T-cell (primary cell): ENCODE measurements at regions of chr7 and their contacts with region 1.

Region 1: DNA sequence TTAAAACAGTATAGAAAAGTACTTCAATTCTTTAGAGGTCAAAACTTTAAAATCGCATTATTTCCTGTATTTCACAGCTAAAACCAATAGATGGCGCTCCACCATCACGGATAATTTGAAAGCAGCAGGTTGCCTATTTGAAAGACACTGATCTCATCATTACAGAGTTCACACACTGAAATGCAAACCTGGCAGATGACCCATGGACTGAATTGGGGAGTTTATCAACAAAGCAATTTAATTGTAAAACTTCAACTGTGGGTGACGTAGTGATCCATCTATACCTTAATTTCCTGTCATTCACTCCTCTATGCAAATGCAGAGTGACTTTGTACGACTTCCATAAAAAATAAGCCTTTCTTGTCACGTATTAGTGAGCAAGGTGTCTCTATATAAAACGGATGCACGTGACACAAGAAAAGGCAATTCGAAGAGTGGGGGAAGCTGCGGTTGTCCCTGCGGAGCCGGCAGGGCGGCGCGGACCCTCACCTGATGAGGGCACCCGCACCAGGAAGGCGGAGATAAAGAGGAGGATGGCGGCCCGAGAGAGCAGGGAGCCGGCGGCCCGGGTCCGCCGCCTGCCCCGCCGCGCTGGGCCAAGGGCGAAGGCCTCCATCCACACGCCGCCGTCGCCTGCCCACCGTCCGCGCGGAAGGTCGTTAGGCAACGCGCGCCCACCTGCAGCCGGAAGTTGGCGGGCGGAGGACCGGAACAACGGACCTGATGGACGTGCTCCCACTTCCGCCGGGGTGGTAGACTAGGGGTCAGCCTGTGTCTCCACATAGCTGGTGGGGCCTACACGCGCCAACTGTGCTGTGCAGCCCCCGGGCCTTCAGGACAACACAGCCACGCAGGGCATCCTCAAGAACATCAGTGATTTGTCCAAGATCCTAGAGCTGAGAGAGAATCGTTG is at the start of gene ZPBP:
- DNase-seq: peak in 32 of 35 experiments; percentile 8 to 82 (median 40)
- ATAC-seq: peak; percentile 71 to 80 (median 79)
- H3K4me3 ChIP-seq: peak within 1 kb of the TSS; percentile 55 to 56
- H3K4me3 Mint-ChIP-seq: peak within 1 kb of the TSS; percentile 87 to 90 (median 87)
- H3K27ac ChIP-seq: peak within 1 kb of the TSS; percentile 45
- H3K27ac Mint-ChIP-seq: peak within 1 kb of the TSS; percentile 66 to 80
- H3K4me1 ChIP-seq: peaks cover 2 to 4% of the 10 kb centered on the region in 2 experiments
- H3K4me1 Mint-ChIP-seq: peaks cover 8 to 17% (median 15%) of the 10 kb centered on the region in 3 donors
- H3K27me3 ChIP-seq: peaks cover 0 to 2% of the 10 kb centered on the region in 2 experiments
- H3K27me3 Mint-ChIP-seq: no peaks in the 10 kb centered on the region
- total RNA-seq, gene ZPBP: 0.46 TPM in 1 of 5 donors, not detected in the others

Region 2: GRCh38 chr7:50056131-50056530 is 36.7 kb before region 1 on chr7:
- CTCF ChIA-PET with region 1: no interaction called
- POLR2A ChIA-PET with region 1: no interaction called
- DNase-seq: no peak
- ATAC-seq: no peak
- H3K4me3 ChIP-seq: no peak overlapping the region
- H3K4me3 Mint-ChIP-seq: no peak overlapping the region
- H3K27ac ChIP-seq: no peak overlapping the region
- H3K27ac Mint-ChIP-seq: no peak overlapping the region
- H3K4me1 ChIP-seq: no peaks in the 10 kb centered on the region
- H3K4me1 Mint-ChIP-seq: peaks cover 0 to 2% (median 0%) of the 10 kb centered on the region in 3 donors
- H3K27me3 ChIP-seq: no peaks in the 10 kb centered on the region
- H3K27me3 Mint-ChIP-seq: peaks cover 8 to 18% of the 10 kb centered on the region in 2 donors

Region 3: DNA sequence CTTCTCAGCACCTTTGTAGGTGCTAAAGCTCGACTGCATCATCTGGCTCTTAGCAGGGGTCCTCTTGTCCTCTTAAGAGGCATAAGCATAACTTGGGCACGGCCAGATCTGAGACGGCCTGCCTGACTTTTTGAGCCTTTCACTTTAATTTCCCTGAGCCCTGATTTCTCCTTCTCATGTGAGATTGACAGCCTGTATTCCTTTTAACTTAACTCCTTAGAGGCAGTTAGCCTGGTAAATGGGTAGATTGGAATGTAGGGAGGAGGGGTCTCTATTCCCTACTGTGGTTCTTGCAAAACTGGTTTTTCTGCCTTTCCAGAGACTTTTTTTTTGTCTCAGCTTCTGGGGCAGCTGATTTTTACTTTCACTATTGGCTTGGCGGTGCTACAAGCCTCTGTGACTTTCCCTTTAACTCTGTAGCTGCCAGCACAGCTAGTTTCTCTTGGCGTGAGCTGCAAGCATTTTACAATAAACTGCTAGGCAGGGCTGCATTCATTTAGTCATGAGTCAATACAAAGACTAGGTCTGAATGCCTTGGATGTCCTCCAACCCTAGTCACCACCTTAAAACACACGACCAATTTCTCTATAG is 23.8 kb before region 1 on chr7:
- CTCF ChIA-PET with region 1: interaction called in 1 of 2 experiments, 12 read pairs
- POLR2A ChIA-PET with region 1: no interaction called
- DNase-seq: peak in 15 of 35 experiments; percentile 6 to 58 (median 26)
- ATAC-seq: peak; percentile 65 to 75 (median 72)
- H3K4me3 ChIP-seq: peak overlapping the region; percentile 62
- H3K4me3 Mint-ChIP-seq: peak overlapping the region; percentile 85 to 87 (median 87)
- H3K27ac ChIP-seq: peak overlapping the region; percentile 75
- H3K27ac Mint-ChIP-seq: peak overlapping the region; percentile 97 to 99
- H3K4me1 ChIP-seq: peaks cover 12 to 24% of the 10 kb centered on the region in 2 experiments
- H3K4me1 Mint-ChIP-seq: peaks cover 27 to 28% (median 27%) of the 10 kb centered on the region in 3 donors
- H3K27me3 ChIP-seq: peaks cover 0 to 2% of the 10 kb centered on the region in 2 experiments
- H3K27me3 Mint-ChIP-seq: peaks cover 1 to 4% of the 10 kb centered on the region in 2 donors

Region 4: GRCh38 chr7:50369143-50370026 is 276.6 kb after region 1 on chr7:
- CTCF ChIA-PET with region 1: interaction called, 3 to 17 read pairs
- POLR2A ChIA-PET with region 1: no interaction called
- DNase-seq: peak in 25 of 35 experiments; percentile 32 to 92 (median 53)
- ATAC-seq: peak; percentile 48 to 64 (median 51)
- H3K4me3 ChIP-seq: no peak overlapping the region
- H3K4me3 Mint-ChIP-seq: peak overlapping the region in 2 of 3 donors; percentile 4 to 49
- H3K27ac ChIP-seq: peak overlapping the region; percentile 96
- H3K27ac Mint-ChIP-seq: peak overlapping the region; percentile 89 to 99
- H3K4me1 ChIP-seq: peaks cover 69 to 80% of the 10 kb centered on the region in 2 experiments
- H3K4me1 Mint-ChIP-seq: peaks cover 98 to 99% (median 98%) of the 10 kb centered on the region in 3 donors
- H3K27me3 ChIP-seq: no peaks in the 10 kb centered on the region
- H3K27me3 Mint-ChIP-seq: no peaks in the 10 kb centered on the region

Region 5: GRCh38 chr7:50467817-50468610 is 375.2 kb after region 1 on chr7:
- CTCF ChIA-PET with region 1: interaction called, 13 to 14 read pairs
- POLR2A ChIA-PET with region 1: interaction called in 1 of 2 experiments, 8 read pairs
- DNase-seq: peak; percentile 52 to 86 (median 73)
- ATAC-seq: peak; percentile 95 to 99 (median 96)
- H3K4me3 ChIP-seq: peak overlapping the region; percentile 4 to 15
- H3K4me3 Mint-ChIP-seq: peak overlapping the region; percentile 40 to 70 (median 54)
- H3K27ac ChIP-seq: no peak overlapping the region
- H3K27ac Mint-ChIP-seq: peak overlapping the region in 1 of 2 donors; percentile 68
- H3K4me1 ChIP-seq: peaks cover 0 to 11% of the 10 kb centered on the region in 2 experiments
- H3K4me1 Mint-ChIP-seq: peaks cover 10 to 12% (median 10%) of the 10 kb centered on the region in 3 donors
- H3K27me3 ChIP-seq: peaks cover 0 to 14% of the 10 kb centered on the region in 2 experiments
- H3K27me3 Mint-ChIP-seq: peaks cover 0 to 6% of the 10 kb centered on the region in 2 donors

Region 6: GRCh38 chr7:50661345-50662040 is 568.7 kb after region 1 on chr7:
- CTCF ChIA-PET with region 1: interaction called in 1 of 2 experiments, 10 read pairs
- POLR2A ChIA-PET with region 1: no interaction called
- DNase-seq: peak in 6 of 35 experiments; percentile 4 to 41 (median 17)
- ATAC-seq: peak in 2 of 4 experiments; percentile 39 to 54
- H3K4me3 ChIP-seq: peak overlapping the region in 1 of 2 donors; percentile 32
- H3K4me3 Mint-ChIP-seq: peak overlapping the region; percentile 54 to 80 (median 64)
- H3K27ac ChIP-seq: peak overlapping the region; percentile 27
- H3K27ac Mint-ChIP-seq: peak overlapping the region; percentile 81 to 93
- H3K4me1 ChIP-seq: peaks cover 31 to 59% of the 10 kb centered on the region in 2 experiments
- H3K4me1 Mint-ChIP-seq: peaks cover 42 to 61% (median 56%) of the 10 kb centered on the region in 3 donors
- H3K27me3 ChIP-seq: peaks cover 0 to 6% of the 10 kb centered on the region in 2 experiments
- H3K27me3 Mint-ChIP-seq: no peaks in the 10 kb centered on the region

Region 7: DNA sequence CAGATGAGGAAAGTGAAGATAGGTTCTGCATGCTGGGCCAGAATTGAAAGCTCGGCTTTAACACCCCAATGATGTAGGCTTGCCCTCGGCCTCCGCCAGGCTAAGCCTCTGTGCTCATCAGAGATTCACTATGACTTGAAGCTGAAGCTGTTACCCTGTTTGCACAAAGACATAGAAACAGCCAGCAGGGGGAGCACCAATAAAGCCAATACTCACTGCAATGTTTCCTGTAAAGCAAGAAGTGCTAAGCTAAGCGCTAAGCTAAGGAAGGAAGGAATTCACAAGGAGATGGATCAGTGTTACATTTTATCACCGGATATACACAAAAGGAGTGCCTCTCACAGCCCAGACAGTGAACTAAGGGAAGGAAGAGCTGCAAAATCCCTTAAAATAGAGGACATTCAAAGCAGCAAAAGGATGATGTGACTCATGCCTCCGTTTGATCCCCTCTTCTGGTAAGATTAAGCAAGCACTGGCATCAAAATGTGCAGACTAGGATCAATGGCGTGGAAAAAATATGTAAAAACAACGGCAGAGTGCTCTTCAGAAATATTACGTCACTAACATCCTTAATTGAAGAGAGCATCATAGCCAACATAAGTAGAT is 1070.0 kb after region 1 on chr7:
- CTCF ChIA-PET with region 1: interaction called, 12 to 71 read pairs
- POLR2A ChIA-PET with region 1: no interaction called
- DNase-seq: peak in 34 of 35 experiments; percentile 22 to 68 (median 44)
- ATAC-seq: peak; percentile 67 to 76 (median 72)
- H3K4me3 ChIP-seq: no peak overlapping the region
- H3K4me3 Mint-ChIP-seq: no peak overlapping the region
- H3K27ac ChIP-seq: no peak overlapping the region
- H3K27ac Mint-ChIP-seq: no peak overlapping the region
- H3K4me1 ChIP-seq: peaks cover 0 to 2% of the 10 kb centered on the region in 2 experiments
- H3K4me1 Mint-ChIP-seq: peaks cover 4 to 7% (median 6%) of the 10 kb centered on the region in 3 donors
- H3K27me3 ChIP-seq: no peaks in the 10 kb centered on the region
- H3K27me3 Mint-ChIP-seq: peaks cover 14 to 22% of the 10 kb centered on the region in 2 donors